GM12878 (cell line): ENCODE measurements at regions of chr15 and their contacts with region 1.

Region 1: DNA sequence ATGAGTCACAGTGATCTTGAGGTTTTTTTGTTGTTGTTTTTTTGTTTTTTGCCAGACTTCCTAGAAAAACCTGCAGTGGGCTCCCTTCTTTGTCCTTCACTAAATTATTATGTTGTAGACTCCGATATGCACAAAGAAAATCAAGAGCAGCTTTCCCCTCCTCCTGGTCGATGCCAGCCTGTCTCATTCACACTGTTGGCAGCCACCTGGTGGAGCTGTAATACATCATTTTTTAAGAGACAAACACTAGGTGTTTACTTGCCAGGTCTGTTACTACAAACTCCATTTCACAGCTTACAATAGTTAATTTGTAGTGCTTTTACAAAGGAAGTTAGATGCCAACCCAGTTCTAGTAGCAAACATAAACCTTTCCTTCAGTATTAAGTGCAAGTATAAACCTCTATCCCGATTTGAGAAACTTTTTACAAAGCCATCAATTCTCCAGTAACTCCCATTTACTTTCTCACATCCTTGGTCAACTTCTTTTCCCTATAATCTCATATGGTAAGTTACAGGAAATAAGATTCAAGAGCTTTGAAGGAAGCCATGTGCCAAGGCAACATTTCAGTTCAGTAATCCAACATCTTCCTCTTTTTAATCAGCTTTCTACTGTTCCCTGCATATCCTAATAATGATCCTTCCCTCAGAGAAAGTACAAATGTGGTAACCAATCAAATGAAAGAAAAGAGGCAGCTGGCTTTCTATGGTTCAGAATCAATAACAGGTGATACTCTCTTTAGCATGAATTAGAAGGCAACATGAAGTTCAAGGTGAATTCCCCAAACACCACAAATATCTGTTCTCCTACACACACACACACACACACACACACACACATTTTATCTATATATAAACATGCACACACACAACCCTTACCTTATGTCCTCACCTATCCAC is 14.0 kb downstream of the AAGAB start:
- DNase-seq: peak; percentile 8
- ATAC-seq: peak; percentile 62
- H3K4me3 ChIP-seq: peak overlapping the region; percentile 50; the same call in 1 of the 2 replicates
- H3K27ac ChIP-seq: peak overlapping the region; percentile 59
- H3K4me1 ChIP-seq: peaks cover 30% of the 10 kb centered on the region
- H3K27me3 ChIP-seq: no peaks in the 10 kb centered on the region
- CTCF ChIP-seq: peak; percentile 25 to 46 (median 38); a peak in 5 of 6 replicates
- EP300 ChIP-seq: no peak
- POLR2A ChIP-seq: no peak
- RAD21 ChIP-seq: peak; percentile 45

Region 2: DNA sequence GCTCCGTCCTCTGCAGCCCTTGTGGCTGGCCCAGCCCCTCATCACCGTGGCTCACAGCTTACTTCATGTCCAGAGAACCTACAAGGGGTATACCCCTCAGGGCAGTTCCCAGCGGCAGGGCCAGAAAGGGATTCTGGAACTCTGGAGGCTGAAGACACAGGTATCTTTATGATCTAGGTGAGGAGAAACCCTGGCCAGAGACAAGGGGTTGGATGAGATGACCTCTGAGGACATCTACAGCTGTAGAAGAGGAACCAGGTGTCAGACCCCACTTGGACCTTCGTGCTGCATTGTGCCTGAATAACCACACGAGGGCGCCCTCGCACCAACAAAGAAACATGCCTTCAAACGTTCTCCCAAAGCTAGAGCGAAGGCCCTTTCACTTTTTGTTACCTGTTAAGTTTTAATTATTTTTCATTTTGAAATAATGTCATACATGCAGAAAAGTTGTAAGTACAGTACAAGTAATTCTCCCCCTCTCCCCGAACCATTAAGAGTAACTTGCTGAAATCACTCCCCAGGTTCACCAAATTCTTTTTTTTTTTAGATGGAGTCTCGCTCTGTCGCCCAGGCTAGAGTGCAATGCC is 293.8 kb before region 1 on chr15:
- CTCF ChIA-PET with region 1: interaction called, 27 read pairs
- POLR2A ChIA-PET with region 1: no interaction called
- RAD21 ChIA-PET with region 1: interaction called, 21 read pairs
- SMC1A ChIA-PET with region 1: interaction called, 16 read pairs
- in situ Hi-C with region 1: no loop called
- intact Hi-C with region 1: no loop called
- DNase-seq: peak; percentile 39
- ATAC-seq: peak; percentile 87
- H3K4me3 ChIP-seq: no peak overlapping the region
- H3K27ac ChIP-seq: no peak overlapping the region
- H3K4me1 ChIP-seq: peaks cover 6% of the 10 kb centered on the region
- H3K27me3 ChIP-seq: no peaks in the 10 kb centered on the region; a peak in 1 of 4 replicates
- CTCF ChIP-seq: peak; percentile 85 to 97 (median 95)
- EP300 ChIP-seq: no peak
- POLR2A ChIP-seq: no peak
- RAD21 ChIP-seq: peak; percentile 98

Region 3: GRCh38 chr15:67085818-67086636 is 154.5 kb before region 1 on chr15:
- CTCF ChIA-PET with region 1: interaction called, 4 read pairs
- POLR2A ChIA-PET with region 1: no interaction called
- RAD21 ChIA-PET with region 1: interaction called, 7 read pairs
- SMC1A ChIA-PET with region 1: interaction called, 22 read pairs
- in situ Hi-C with region 1: no loop called
- intact Hi-C with region 1: loop called (anchors 5 kb)
- DNase-seq: peak; percentile 97
- ATAC-seq: peak; percentile 66
- H3K4me3 ChIP-seq: peak overlapping the region; percentile 54
- H3K27ac ChIP-seq: peak overlapping the region; percentile 86
- H3K4me1 ChIP-seq: peaks cover 84% of the 10 kb centered on the region
- H3K27me3 ChIP-seq: no peaks in the 10 kb centered on the region
- CTCF ChIP-seq: no peak
- EP300 ChIP-seq: peak; percentile 95 to 96
- POLR2A ChIP-seq: no peak
- RAD21 ChIP-seq: peak; percentile 26; the same call in 1 of the 2 replicates

Region 4: GRCh38 chr15:67254238-67255175 is 14.0 kb after region 1 on chr15 and contains the starts of genes AAGAB and IQCH:
- CTCF ChIA-PET with region 1: interaction called, 8 read pairs
- POLR2A ChIA-PET with region 1: no interaction called
- RAD21 ChIA-PET with region 1: interaction called, 6 read pairs
- SMC1A ChIA-PET with region 1: interaction called, 11 read pairs
- in situ Hi-C with region 1: no loop called
- intact Hi-C with region 1: no loop called
- DNase-seq: peak; percentile 90
- ATAC-seq: peak; percentile 97
- H3K4me3 ChIP-seq: peak within 1 kb of the TSS; percentile 84
- H3K27ac ChIP-seq: peak within 1 kb of the TSS; percentile 78
- H3K4me1 ChIP-seq: no peaks in the 10 kb centered on the region
- H3K27me3 ChIP-seq: no peaks in the 10 kb centered on the region
- CTCF ChIP-seq: no peak
- EP300 ChIP-seq: no peak
- POLR2A ChIP-seq: peak; percentile 99
- RAD21 ChIP-seq: no peak
- polyA plus RNA-seq, gene AAGAB: 11.4 to 32.4 TPM
- polyA plus RNA-seq, gene IQCH: 0.58 to 1.3 TPM

Region 5: GRCh38 chr15:67433495-67434099 is 193.1 kb after region 1 on chr15:
- CTCF ChIA-PET with region 1: interaction called, 24 read pairs
- POLR2A ChIA-PET with region 1: no interaction called
- RAD21 ChIA-PET with region 1: no interaction called
- SMC1A ChIA-PET with region 1: interaction called, 5 read pairs
- in situ Hi-C with region 1: no loop called
- intact Hi-C with region 1: no loop called
- DNase-seq: peak; percentile 15
- ATAC-seq: peak; percentile 79
- H3K4me3 ChIP-seq: no peak overlapping the region
- H3K27ac ChIP-seq: no peak overlapping the region
- H3K4me1 ChIP-seq: no peaks in the 10 kb centered on the region
- H3K27me3 ChIP-seq: no peaks in the 10 kb centered on the region
- CTCF ChIP-seq: peak; percentile 58 to 78 (median 72)
- EP300 ChIP-seq: no peak
- POLR2A ChIP-seq: no peak
- RAD21 ChIP-seq: peak; percentile 68